ENCODE measurements at regions of chr9 and their contacts with region 1.

Region 1: DNA sequence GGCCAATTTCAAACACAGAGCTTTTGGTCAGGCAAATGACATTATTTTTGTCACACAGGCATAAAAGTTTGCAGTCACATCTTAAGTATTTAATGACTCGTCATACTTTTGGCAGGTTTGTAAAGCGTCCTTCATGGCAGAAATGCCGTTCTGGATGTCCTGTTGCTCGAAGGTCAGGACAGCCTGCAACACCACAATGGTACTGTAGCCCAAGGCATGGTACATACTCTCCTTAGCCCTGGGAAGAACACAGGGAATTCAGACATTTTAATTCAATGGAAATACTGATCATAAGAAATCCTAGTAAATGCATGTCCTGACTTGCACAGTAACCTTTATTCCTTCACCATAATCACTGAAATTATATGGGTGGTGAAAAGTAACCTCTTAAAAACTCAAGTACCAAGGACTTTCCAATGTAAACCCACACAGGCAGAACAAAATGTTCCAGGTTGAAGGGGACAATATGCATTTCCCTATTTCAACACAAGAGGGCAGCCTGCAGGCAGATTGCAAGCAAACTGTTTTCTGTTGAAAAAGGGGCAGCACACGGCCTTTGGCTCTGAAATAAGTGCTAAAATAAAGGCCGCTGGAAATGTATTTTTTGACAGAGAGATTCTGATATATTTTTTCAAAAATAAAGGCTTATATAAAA is 95.7 kb downstream of the TTC39B start:
- DNase-seq: peak; percentile 69
- H3K4me3 Mint-ChIP-seq: no peak overlapping the region
- H3K27ac Mint-ChIP-seq: no peak overlapping the region
- H3K4me1 Mint-ChIP-seq: peaks cover 14% of the 10 kb centered on the region
- H3K27me3 Mint-ChIP-seq: no peaks in the 10 kb centered on the region

Region 2: DNA sequence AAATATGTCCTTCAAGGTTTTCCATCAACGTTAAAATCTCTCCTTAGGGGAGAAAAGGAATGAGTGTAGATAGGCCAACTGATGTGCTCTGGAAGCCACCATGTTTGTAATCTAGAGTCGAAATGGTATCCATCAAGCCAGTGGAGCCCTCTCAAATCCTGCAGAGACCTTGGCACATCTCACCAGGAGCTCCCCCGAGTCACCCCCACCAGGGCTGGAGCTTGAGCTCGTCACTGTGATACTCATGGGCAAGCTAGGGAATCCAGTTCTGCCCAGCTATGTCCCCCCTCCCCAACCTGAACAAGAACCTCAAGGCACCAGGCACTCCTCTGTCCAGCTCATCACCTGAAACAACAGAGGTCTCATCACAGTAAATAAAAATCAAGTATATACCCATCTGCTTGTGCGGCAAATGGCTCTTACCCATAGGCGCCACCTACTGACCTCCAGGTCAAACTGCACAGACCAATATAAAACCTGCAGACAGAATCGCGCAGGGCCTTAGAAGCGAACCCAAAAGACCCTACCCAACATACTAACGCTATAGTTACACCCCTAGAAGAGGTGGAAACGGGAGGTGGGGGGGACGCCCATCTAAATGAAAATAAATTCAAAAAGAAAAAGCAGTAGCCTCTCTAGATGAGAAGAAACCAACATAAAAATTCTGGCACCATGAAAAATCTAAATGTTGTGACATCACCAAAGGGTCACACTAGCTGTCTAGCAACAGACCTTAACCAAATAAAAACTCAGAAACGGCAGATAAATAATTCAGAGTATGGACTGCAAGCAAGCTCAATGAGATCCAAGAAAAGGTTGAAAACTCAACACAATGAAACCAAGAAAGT is 20.7 kb after region 1 on chr9:
- CTCF ChIA-PET with region 1: interaction called, 24 read pairs
- intact Hi-C with region 1: loop called (anchors 1 kb)
- DNase-seq: peak; percentile 25
- H3K4me3 Mint-ChIP-seq: no peak overlapping the region
- H3K27ac Mint-ChIP-seq: no peak overlapping the region
- H3K4me1 Mint-ChIP-seq: peaks cover 47% of the 10 kb centered on the region
- H3K27me3 Mint-ChIP-seq: no peaks in the 10 kb centered on the region

Region 3: GRCh38 chr9:15306757-15307534 is 95.7 kb after region 1 on chr9 and contains the start of gene TTC39B:
- CTCF ChIA-PET with region 1: interaction called, 18 read pairs
- intact Hi-C with region 1: loop called (anchors 1 kb)
- DNase-seq: peak; percentile 86
- H3K4me3 Mint-ChIP-seq: peak within 1 kb of the TSS; percentile 99
- H3K27ac Mint-ChIP-seq: peak within 1 kb of the TSS; percentile 95
- H3K4me1 Mint-ChIP-seq: peaks cover 57% of the 10 kb centered on the region
- H3K27me3 Mint-ChIP-seq: no peaks in the 10 kb centered on the region
- total RNA-seq, gene TTC39B: 43.9 to 46.4 TPM

Region 4: DNA sequence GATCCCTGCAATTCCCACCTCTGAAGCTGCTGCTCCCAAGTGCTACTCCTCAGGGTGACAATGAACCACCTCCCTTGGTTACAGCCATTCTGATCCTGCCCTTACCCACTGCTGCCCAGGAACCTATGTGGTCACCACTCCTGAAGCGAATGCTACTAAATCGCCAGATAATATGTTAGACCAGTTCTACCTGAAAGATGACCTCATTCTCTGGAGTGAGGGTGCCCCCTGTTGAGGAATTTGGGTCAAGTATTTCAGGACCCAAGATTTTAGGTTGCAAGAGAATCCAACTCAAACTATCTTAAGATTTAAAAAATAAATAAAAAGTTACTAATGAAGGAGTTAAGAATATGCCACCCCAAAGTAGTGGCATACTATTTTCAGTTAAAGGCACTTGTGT is 205.6 kb after region 1 on chr9:
- CTCF ChIA-PET with region 1: interaction called, 12 read pairs
- intact Hi-C with region 1: loop called (anchors 1 kb)
- DNase-seq: peak; percentile 67
- H3K4me3 Mint-ChIP-seq: no peak overlapping the region
- H3K27ac Mint-ChIP-seq: no peak overlapping the region
- H3K4me1 Mint-ChIP-seq: no peaks in the 10 kb centered on the region
- H3K27me3 Mint-ChIP-seq: no peaks in the 10 kb centered on the region

Region 5: DNA sequence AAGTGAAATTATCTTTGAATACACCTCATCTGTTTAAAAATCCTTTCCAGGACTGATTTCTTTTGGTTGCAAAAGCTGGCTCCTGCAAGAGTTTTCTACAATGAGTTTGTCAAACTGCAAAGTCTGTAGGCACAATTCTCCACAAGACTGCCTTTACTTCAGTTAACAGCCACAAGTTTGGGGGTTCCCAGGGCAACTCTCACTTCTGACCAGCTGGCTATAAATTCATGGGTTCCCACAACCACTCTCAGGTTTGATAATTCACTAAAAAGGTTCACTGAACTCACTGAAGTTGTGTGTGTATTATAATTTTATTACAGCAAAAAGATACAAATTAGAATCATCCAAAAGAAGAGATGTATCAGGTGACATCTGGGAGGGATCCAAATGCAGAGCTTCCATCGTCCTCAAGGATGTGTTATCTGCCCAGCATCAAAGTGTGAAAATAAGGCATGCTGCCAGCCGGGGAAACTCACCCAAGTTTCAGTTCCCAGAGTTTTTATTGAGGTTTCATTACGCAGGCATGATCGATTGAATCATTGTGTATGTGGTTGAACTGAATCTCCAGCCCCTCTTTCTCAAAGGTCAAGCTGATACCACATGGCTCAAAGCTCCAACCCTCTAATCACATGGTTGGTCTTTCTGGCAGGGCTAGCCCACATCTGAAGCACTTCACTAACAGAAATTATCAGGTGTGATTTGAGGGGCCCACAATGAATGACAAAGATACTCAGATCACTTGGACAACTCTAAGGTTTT is 318.5 kb after region 1 on chr9:
- CTCF ChIA-PET with region 1: interaction called, 5 read pairs
- intact Hi-C with region 1: loop called (anchors 1 kb)
- DNase-seq: no peak
- H3K4me3 Mint-ChIP-seq: no peak overlapping the region
- H3K27ac Mint-ChIP-seq: no peak overlapping the region
- H3K4me1 Mint-ChIP-seq: peaks cover 11% of the 10 kb centered on the region
- H3K27me3 Mint-ChIP-seq: no peaks in the 10 kb centered on the region

Region 6: DNA sequence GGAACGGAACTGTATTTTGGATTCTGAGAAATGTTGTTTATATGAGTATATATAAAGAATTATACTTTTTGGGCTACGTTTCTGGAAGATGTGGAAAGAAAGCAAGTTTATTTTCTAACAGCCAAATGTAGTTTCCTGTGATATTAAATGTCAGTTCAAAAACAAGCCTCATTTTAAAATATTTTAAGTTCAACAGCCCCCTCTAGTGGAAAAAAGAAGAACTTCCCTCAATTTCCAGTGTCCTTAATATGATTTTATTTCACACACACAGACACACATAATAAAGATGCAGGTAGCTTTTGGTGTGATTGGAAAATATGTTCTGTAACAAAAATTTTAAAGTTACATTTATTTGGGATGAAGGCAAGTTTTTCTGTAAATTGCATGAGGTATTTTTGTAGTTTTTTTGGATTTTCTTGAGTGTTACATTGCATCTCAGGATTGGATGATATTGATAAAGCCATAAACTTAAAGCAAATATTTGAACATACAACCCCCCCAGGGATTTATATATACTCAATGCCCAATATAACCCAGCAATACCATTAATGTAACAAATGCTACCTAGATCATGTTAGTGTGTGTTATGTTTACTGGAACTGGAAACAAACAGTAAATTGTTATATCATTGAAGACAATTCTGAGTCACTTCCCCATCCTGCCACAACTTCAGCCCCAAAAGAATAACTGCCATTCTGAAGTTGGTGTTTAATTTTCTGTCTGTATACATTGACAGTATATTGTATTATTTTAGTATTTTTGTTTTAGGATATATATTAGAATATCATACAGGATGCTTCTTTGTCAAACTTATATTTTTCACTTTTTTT is 395.6 kb after region 1 on chr9:
- CTCF ChIA-PET with region 1: interaction called, 8 read pairs
- intact Hi-C with region 1: loop called (anchors 1 kb)
- DNase-seq: no peak
- H3K4me3 Mint-ChIP-seq: no peak overlapping the region
- H3K27ac Mint-ChIP-seq: no peak overlapping the region
- H3K4me1 Mint-ChIP-seq: no peaks in the 10 kb centered on the region
- H3K27me3 Mint-ChIP-seq: no peaks in the 10 kb centered on the region